ENCODE measurements at regions of chr16 and their contacts with region 1.

Region 1: DNA sequence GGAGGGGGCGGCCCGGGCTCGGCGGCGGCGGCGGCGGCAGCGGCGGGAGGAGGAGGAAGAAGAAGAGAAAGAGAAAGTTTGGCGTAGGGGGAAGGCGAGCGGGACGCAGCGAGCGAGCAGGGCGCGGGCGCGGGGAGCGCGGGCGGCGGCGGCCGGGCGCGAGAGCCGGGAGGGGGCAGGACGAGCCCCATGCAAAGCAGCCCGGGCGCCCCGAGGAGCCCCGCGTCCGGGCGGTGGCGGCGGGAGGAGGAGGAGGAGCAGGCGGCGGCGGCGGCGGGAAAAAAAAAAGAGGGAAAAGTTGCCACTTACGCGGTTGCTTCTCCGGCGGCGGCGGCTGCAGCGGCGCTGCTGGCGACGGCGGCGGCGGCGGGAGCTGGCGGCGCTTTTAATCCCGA is 10.3 kb upstream of the ZFHX3 start:
- DNase-seq: no peak
- ATAC-seq: peak; percentile 25
- H3K4me3 ChIP-seq: peak overlapping the region; percentile 82
- H3K27ac ChIP-seq: peak overlapping the region; percentile 4
- H3K4me1 ChIP-seq: peaks cover 23% of the 10 kb centered on the region
- H3K27me3 ChIP-seq: no peaks in the 10 kb centered on the region
- CTCF ChIP-seq: 0 out of 2 replicates have a peak, but pooled peaks have one; percentile 5
- POLR2A ChIP-seq: no peak
- RAD21 ChIP-seq: no peak

Region 2: DNA sequence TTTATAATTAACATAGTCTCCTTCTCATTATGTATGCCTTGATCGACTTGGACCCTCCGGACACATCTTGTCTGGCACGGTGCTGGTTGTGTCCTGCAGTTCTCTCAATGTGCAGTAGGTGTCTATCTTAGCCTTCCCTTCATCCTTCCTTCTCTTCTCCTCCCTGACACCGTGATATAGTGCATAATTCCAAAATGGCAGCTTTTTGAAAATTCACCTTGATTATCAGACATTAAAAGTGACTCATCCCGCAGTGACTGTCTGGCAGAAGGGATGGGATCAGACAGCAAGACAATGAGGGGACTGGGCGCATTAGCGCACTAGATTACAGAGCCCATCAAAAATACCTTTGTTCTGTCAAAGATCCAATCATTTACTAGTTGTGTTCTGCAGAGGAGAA is 816.3 kb before region 1 on chr16:
- CTCF ChIA-PET with region 1: no interaction called
- POLR2A ChIA-PET with region 1: no interaction called
- dilution Hi-C with region 1: no loop called
- in situ Hi-C with region 1: no loop called
- intact Hi-C with region 1: loop called (anchors 10 kb)
- DNase-seq: peak; percentile 55
- ATAC-seq: peak; percentile 100
- H3K4me3 ChIP-seq: no peak overlapping the region
- H3K27ac ChIP-seq: no peak overlapping the region
- H3K4me1 ChIP-seq: no peaks in the 10 kb centered on the region
- H3K27me3 ChIP-seq: no peaks in the 10 kb centered on the region
- CTCF ChIP-seq: peak; percentile 92
- POLR2A ChIP-seq: peak; percentile 55
- RAD21 ChIP-seq: peak; percentile 95

Region 3: GRCh38 chr16:72664509-72665225 is 393.6 kb before region 1 on chr16:
- CTCF ChIA-PET with region 1: no interaction called
- POLR2A ChIA-PET with region 1: no interaction called
- dilution Hi-C with region 1: no loop called
- in situ Hi-C with region 1: loop called (anchors 10 kb)
- intact Hi-C with region 1: loop called (anchors 5 kb)
- DNase-seq: peak; percentile 99
- ATAC-seq: peak; percentile 100
- H3K4me3 ChIP-seq: peak overlapping the region; percentile 65
- H3K27ac ChIP-seq: peak overlapping the region; percentile 26; the same call in 1 of the 2 replicates
- H3K4me1 ChIP-seq: no peaks in the 10 kb centered on the region
- H3K27me3 ChIP-seq: no peaks in the 10 kb centered on the region
- CTCF ChIP-seq: no peak
- POLR2A ChIP-seq: peak; percentile 67; the same call in 1 of the 2 replicates
- RAD21 ChIP-seq: no peak

Region 4: GRCh38 chr16:72847187-72848027 is 210.8 kb before region 1 on chr16:
- CTCF ChIA-PET with region 1: interaction called, 3 read pairs
- POLR2A ChIA-PET with region 1: no interaction called
- dilution Hi-C with region 1: no loop called
- in situ Hi-C with region 1: loop called (anchors 10 kb)
- intact Hi-C with region 1: no loop called
- DNase-seq: peak; percentile 36
- ATAC-seq: peak; percentile 50; the same call in 1 of the 2 replicates
- H3K4me3 ChIP-seq: no peak overlapping the region
- H3K27ac ChIP-seq: no peak overlapping the region
- H3K4me1 ChIP-seq: peaks cover 27% of the 10 kb centered on the region
- H3K27me3 ChIP-seq: no peaks in the 10 kb centered on the region
- CTCF ChIP-seq: peak; percentile 38
- POLR2A ChIP-seq: no peak
- RAD21 ChIP-seq: peak; percentile 53

Region 5: GRCh38 chr16:73196670-73197069 is 138.5 kb after region 1 on chr16:
- CTCF ChIA-PET with region 1: interaction called, 4 read pairs
- POLR2A ChIA-PET with region 1: interaction called, 14 read pairs
- dilution Hi-C with region 1: no loop called
- in situ Hi-C with region 1: no loop called
- intact Hi-C with region 1: loop called (anchors 1 kb)
- DNase-seq: peak; percentile 53
- ATAC-seq: peak; percentile 72
- H3K4me3 ChIP-seq: no peak overlapping the region
- H3K27ac ChIP-seq: no peak overlapping the region
- H3K4me1 ChIP-seq: no peaks in the 10 kb centered on the region
- H3K27me3 ChIP-seq: peaks cover 14% of the 10 kb centered on the region
- CTCF ChIP-seq: peak; percentile 60
- POLR2A ChIP-seq: no peak
- RAD21 ChIP-seq: peak; percentile 75

Region 6: GRCh38 chr16:73956587-73957494 is 898.6 kb after region 1 on chr16:
- CTCF ChIA-PET with region 1: no interaction called
- POLR2A ChIA-PET with region 1: no interaction called
- dilution Hi-C with region 1: no loop called
- in situ Hi-C with region 1: no loop called
- intact Hi-C with region 1: loop called (anchors 5 kb)
- DNase-seq: peak; percentile 64
- ATAC-seq: peak; percentile 92
- H3K4me3 ChIP-seq: no peak overlapping the region
- H3K27ac ChIP-seq: no peak overlapping the region
- H3K4me1 ChIP-seq: no peaks in the 10 kb centered on the region
- H3K27me3 ChIP-seq: no peaks in the 10 kb centered on the region
- CTCF ChIP-seq: peak; percentile 74
- POLR2A ChIP-seq: no peak
- RAD21 ChIP-seq: peak; percentile 73

Measured in IMR-90 (cell line).